ENCODE measurements at regions of chr14 and their contacts with region 1.

Region 1: GRCh38 chr14:35299708-35300107 is 7.5 kb downstream of the PSMA6 start:
- DNase-seq: no peak
- H3K4me3 ChIP-seq: no peak overlapping the region
- H3K27ac ChIP-seq: peak overlapping the region in 1 of 2 experiments; percentile 49
- H3K4me1 ChIP-seq: peaks cover 13 to 55% (median 45%) of the 10 kb centered on the region in 4 experiments
- H3K27me3 ChIP-seq: no peaks in the 10 kb centered on the region

Region 2: DNA sequence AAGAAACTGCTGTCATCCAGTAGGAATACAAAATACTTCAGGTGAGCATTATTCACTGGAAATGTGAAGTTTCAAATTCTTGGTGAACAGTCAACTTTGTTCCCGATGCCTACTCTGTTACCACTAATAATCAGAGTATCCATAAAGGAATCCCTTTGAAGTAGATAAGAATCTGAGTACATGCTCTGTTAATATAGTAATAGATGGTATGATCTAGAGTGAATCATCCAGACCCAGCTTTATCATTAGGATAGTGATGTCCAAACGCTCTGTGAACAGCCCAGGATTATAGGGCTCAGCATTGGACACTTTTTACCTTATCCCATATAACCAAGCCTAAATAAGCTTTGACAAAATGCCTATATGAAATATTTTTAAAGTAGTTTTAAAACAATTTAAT is 211.2 kb before region 1 on chr14:
- CTCF ChIA-PET with region 1: no interaction called
- POLR2A ChIA-PET with region 1: no interaction called
- DNase-seq: no peak
- H3K4me3 ChIP-seq: no peak overlapping the region
- H3K27ac ChIP-seq: no peak overlapping the region
- H3K4me1 ChIP-seq: no peaks in the 10 kb centered on the region
- H3K27me3 ChIP-seq: no peaks in the 10 kb centered on the region

Region 3: GRCh38 chr14:35201066-35201465 is 98.6 kb before region 1 on chr14:
- CTCF ChIA-PET with region 1: no interaction called
- POLR2A ChIA-PET with region 1: no interaction called
- DNase-seq: peak in 2 of 3 donors; percentile 32 to 33
- H3K4me3 ChIP-seq: no peak overlapping the region
- H3K27ac ChIP-seq: no peak overlapping the region
- H3K4me1 ChIP-seq: peaks cover 0 to 23% (median 18%) of the 10 kb centered on the region in 4 experiments
- H3K27me3 ChIP-seq: no peaks in the 10 kb centered on the region

Region 4: DNA sequence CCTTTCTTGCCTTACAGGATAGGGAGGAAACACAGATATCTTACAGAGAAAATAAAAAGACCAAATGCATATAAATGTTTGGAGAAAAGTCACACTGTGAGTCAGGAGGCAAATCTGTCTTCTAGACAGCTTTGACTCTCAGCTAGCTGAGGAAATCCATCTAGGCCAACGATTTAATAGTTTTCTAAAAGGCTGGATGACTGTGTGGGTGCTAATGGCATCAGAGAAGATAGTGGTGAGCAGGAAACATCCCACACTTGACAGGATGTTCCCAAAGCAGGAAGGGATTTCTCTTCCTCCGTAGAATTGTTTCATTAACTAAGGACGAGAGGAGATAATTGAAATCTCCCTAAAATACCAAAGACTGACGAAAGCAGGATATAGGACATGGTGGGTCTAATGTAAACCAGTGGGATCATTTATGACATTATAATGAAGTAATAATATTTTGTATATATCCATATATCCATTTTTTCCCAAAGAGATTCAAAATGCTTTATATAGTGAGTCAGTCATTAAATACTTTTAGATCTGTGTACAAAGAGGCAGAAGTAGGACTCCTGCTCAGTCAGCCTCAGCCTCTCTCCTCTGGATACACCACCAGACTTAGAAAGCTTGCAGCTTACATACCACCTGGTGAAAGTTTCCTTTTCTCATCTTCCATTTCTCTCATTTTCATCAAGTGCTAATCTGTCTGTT is 51.8 kb before region 1 on chr14:
- CTCF ChIA-PET with region 1: no interaction called
- POLR2A ChIA-PET with region 1: no interaction called
- DNase-seq: no peak
- H3K4me3 ChIP-seq: no peak overlapping the region
- H3K27ac ChIP-seq: no peak overlapping the region
- H3K4me1 ChIP-seq: peaks cover 10 to 27% (median 16%) of the 10 kb centered on the region in 4 experiments
- H3K27me3 ChIP-seq: no peaks in the 10 kb centered on the region

Region 5: DNA sequence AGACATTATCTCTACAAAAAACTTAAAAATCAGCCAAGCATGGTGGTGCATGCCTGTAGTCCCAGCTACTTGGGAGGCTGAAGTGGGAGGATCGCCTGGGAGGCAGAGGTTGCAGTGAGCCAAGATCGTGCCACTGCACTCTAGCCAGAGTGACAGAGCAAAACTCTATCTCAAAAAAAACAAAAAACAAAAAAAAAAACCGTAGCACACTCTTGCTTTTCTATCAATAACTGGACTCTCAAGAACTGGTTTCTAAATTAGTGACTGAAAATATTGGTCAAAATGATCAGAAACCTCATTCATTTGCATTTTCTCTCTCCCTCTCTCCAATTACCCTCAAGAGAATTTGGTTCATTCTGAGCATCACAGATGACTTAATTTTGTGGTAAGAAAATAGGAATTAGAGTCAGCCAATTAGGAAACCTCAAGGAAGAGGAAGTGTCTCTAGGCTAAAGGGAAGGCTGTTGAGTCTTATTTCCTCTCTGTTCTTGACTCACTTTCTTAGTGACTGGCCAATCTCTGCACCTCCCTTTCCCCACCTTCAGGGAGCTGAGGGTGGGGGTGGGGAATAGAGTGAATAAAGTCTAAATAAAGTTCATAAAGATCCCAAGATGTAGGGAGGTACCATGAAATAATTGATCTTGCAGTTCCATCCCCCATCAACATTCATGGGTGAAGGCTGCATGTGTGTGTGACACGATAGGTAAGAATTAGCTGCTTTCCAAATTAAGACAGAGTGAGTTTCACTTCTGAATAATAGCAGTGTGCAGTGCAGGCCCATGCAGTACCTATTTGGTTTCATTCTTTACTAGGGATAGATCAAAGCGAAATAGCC is 14.3 kb before region 1 on chr14:
- CTCF ChIA-PET with region 1: interaction called, 18 read pairs
- POLR2A ChIA-PET with region 1: interaction called, 4 read pairs
- DNase-seq: peak; percentile 78 to 90 (median 85)
- H3K4me3 ChIP-seq: peak overlapping the region in 6 of 7 experiments; percentile 39 to 66 (median 53)
- H3K27ac ChIP-seq: peak overlapping the region; percentile 77 to 89
- H3K4me1 ChIP-seq: peaks cover 52 to 92% (median 68%) of the 10 kb centered on the region in 4 experiments
- H3K27me3 ChIP-seq: no peaks in the 10 kb centered on the region

Measured in common myeloid progenitor, CD34-positive (primary cell).